ENCODE measurements at regions of chr10 and their contacts with region 1.

Region 1: GRCh38 chr10:44310762-44311562 is 73.9 kb downstream of the CXCL12 start:
- DNase-seq: peak; percentile 90 to 95
- ATAC-seq: peak; percentile 92 to 96 (median 94)
- H3K4me3 ChIP-seq: peak overlapping the region; percentile 60
- H3K27ac ChIP-seq: peak overlapping the region; percentile 21
- H3K4me1 ChIP-seq: peaks cover 13% of the 10 kb centered on the region
- H3K27me3 ChIP-seq: no peaks in the 10 kb centered on the region
- CTCF ChIP-seq: peak; percentile 94

Region 2: GRCh38 chr10:43671656-43672531 is 639.1 kb before region 1 on chr10:
- intact Hi-C with region 1: loop called (anchors 5 to 10 kb)
- DNase-seq: peak in 1 of 2 donors; percentile 32
- ATAC-seq: peak; percentile 71 to 89 (median 86)
- H3K4me3 ChIP-seq: no peak overlapping the region
- H3K27ac ChIP-seq: no peak overlapping the region
- H3K4me1 ChIP-seq: no peaks in the 10 kb centered on the region
- H3K27me3 ChIP-seq: peaks cover 0 to 17% (median 6%) of the 10 kb centered on the region in 3 donors
- CTCF ChIP-seq: peak; percentile 83

Region 3: DNA sequence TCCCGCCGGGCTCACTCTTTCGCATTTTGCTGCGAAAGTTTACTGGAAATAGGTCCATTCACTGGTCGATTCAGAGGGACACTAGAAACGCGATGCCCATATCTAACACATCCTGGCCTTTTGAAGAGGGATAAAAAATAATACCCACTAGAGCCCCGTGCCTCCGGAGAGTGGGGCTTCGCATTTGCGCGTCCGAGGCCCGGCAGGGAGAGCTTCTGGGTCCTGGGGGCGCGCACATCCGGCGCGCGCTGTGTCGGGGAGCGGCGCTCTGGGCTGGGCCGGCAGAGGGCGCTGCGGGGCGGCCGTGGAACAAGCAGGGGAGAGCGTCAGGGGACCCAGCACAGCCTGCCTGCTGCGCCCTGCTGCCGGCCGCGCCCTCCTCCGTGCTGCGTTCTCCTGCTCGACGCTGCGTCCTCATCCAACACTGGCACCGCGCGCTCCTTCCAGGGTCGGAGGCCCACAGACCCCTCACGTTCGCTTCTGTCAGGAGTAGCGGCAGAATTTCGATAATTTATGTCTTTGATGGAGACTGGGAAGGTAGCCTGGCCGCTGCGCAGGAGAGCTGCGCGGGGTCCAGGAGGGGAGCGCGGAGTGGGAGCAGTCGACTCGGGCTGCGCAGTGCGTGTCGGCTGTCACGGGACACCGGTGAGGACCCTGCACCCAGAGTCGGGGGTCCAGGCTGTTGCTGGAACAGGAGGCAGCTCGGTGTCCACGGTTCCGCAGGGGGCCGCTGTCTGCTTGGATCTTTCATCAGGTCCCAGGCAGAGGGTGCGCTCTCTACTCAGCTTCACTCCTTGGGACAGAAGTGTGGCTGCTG is 620.8 kb before region 1 on chr10:
- intact Hi-C with region 1: loop called in 1 of 2 experiments (anchors 5 kb)
- DNase-seq: peak; percentile 86 to 92
- ATAC-seq: peak; percentile 97 to 99 (median 98)
- H3K4me3 ChIP-seq: peak overlapping the region; percentile 66
- H3K27ac ChIP-seq: peak overlapping the region; percentile 68
- H3K4me1 ChIP-seq: no peaks in the 10 kb centered on the region
- H3K27me3 ChIP-seq: no peaks in the 10 kb centered on the region
- CTCF ChIP-seq: peak; percentile 85

Region 4: DNA sequence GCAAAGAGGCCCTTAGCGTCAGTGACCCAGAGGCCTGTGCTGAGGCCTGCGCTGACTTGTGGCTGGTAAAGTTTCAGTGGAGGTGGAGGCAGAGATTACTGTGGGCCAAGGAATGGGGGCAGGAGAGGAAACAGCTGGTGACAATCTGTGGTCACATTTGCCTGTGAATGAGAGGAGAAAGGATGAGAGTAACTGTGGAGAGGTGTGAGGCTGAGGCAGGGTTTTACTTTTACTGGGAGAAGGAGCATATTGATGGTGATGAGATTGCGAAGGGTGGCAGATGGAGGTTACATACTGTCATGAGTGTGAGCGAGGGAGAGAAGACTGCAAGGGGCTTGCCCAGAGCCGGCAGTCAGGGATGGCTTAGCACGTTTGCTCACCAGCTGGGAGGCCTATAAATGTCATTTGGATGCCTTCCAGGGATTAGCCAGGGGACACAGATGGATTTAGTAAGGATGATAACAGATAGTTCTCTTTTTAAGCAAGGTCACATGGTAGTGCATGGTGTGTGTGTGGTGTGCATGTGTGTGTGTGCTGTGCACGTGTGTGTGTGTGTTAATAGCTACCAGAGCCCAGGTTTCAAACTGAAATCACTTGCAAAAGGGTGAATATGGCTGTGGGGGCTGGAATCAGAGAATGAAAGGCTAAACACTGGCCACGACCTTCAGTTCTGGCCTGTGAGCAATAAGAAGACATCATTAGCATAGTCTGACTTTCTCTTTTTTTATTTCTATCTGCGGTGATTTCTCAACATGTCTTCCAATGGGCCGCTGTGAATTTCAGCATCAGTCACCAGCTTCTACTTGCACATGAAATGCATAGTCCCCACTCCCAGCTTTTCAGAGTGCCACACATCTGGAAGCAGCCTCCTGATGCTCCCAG is 370.8 kb before region 1 on chr10:
- intact Hi-C with region 1: no loop called
- DNase-seq: no peak
- ATAC-seq: no peak
- H3K4me3 ChIP-seq: no peak overlapping the region
- H3K27ac ChIP-seq: no peak overlapping the region
- H3K4me1 ChIP-seq: no peaks in the 10 kb centered on the region
- H3K27me3 ChIP-seq: no peaks in the 10 kb centered on the region
- CTCF ChIP-seq: no peak

Region 5: DNA sequence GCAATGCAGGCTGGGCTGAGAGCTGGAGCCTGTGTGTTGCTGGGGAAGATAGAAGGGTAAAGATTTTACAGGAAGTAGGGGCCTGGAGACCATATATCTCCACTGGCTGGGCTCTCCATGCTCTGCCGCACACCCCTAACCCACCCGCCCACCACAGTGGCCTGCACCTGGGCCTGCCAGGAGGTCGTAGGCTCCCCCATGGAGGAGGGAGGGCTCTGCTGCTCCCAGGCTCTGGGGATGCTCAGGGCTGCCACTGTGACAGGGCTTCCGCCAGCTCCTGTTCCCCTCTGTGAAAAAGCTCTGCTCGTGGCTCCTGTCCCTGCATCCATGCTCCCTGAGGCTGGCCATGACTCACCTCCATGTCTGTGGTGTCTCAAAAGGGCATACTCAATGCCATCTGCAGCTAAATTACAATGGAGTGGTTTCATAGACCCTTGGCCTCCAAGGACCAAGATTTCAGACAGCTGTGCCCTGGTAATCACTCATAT is 32.1 kb before region 1 on chr10:
- intact Hi-C with region 1: no loop called
- DNase-seq: peak in 1 of 2 donors; percentile 45
- ATAC-seq: no peak
- H3K4me3 ChIP-seq: no peak overlapping the region
- H3K27ac ChIP-seq: no peak overlapping the region
- H3K4me1 ChIP-seq: peaks cover 4% of the 10 kb centered on the region
- H3K27me3 ChIP-seq: no peaks in the 10 kb centered on the region
- CTCF ChIP-seq: no peak

Region 6: GRCh38 chr10:44857363-44858016 is 546.5 kb after region 1 on chr10:
- intact Hi-C with region 1: loop called in 1 of 2 experiments (anchors 5 kb)
- DNase-seq: peak; percentile 58 to 80
- ATAC-seq: peak; percentile 80 to 88 (median 82)
- H3K4me3 ChIP-seq: no peak overlapping the region
- H3K27ac ChIP-seq: no peak overlapping the region
- H3K4me1 ChIP-seq: no peaks in the 10 kb centered on the region
- H3K27me3 ChIP-seq: no peaks in the 10 kb centered on the region
- CTCF ChIP-seq: peak; percentile 96

Measured in psoas muscle (tissue), 8 donors.